ENCODE measurements at regions of chr3 and their contacts with region 1.

Region 1: GRCh38 chr3:63228087-63229023 is 49.8 kb upstream of the SYNPR start:
- DNase-seq: peak; percentile 60
- H3K4me3 Mint-ChIP-seq: no peak overlapping the region
- H3K27ac Mint-ChIP-seq: peak overlapping the region; percentile 59
- H3K4me1 Mint-ChIP-seq: peaks cover 12% of the 10 kb centered on the region
- H3K27me3 Mint-ChIP-seq: peaks cover 21% of the 10 kb centered on the region
- CTCF ChIP-seq: peak; percentile 57

Region 2: DNA sequence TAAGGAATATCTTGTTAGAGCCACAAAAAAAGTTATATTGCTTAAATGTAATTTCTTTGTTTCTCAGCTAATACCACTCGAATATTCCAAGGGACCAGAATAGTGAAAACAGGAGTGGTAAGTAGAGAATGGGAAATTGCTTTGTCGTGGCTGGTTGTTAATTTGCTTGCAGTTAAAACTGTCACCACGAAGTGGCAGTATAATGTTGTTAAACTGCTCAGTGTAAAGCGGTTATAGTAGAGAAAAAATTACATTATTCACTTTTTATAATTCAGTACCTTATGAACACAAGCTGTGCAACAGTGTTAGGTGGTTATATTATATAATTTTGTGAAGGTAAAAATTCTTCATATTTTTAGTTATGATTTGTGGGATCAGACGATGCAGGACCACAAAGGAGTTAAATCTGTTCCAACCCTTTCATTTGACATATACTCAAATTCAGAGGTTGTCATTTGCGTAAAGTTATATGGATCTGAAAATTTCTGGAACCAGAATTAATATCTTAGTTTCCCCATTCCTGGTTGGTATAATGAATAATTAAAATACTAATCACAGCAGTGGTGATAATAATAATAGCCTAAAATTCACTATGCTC is 1026.8 kb before region 1 on chr3:
- CTCF ChIA-PET with region 1: interaction called, 3 read pairs
- POLR2A ChIA-PET with region 1: no interaction called
- intact Hi-C with region 1: loop called (anchors 5 kb)
- DNase-seq: peak; percentile 41
- H3K4me3 Mint-ChIP-seq: no peak overlapping the region
- H3K27ac Mint-ChIP-seq: no peak overlapping the region
- H3K4me1 Mint-ChIP-seq: no peaks in the 10 kb centered on the region
- H3K27me3 Mint-ChIP-seq: no peaks in the 10 kb centered on the region
- CTCF ChIP-seq: peak; percentile 53

Region 3: DNA sequence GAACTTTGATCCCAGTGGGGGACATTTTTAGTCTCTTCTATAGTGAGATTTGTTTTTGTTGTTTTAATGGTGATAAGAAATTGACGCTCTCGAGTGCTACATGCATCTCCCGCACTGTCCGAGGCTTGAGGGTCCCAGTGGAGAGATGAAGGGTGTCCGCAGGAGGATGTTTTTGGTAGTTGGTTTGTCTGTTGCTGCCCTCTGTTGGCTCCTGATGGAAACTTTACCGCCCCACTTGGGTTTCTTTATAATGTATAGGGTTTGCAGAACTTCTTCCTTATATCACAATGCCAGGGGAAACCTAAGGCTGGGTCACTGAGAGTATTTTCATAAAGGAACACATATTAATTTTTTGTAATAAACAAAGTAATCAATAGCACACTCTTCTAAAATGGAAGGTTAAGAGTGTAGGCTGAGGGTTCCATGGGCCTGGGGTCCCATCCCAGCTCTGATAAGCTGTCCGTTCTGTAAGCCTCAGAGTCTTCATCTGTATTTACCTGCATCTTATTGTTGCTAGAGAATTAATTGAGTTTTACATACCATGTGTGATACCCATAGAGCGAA is 669.7 kb before region 1 on chr3:
- CTCF ChIA-PET with region 1: interaction called, 7 read pairs
- POLR2A ChIA-PET with region 1: interaction called, 3 read pairs
- intact Hi-C with region 1: loop called (anchors 5 kb)
- DNase-seq: peak; percentile 48
- H3K4me3 Mint-ChIP-seq: no peak overlapping the region
- H3K27ac Mint-ChIP-seq: no peak overlapping the region
- H3K4me1 Mint-ChIP-seq: peaks cover 13% of the 10 kb centered on the region
- H3K27me3 Mint-ChIP-seq: no peaks in the 10 kb centered on the region
- CTCF ChIP-seq: peak; percentile 45

Region 4: DNA sequence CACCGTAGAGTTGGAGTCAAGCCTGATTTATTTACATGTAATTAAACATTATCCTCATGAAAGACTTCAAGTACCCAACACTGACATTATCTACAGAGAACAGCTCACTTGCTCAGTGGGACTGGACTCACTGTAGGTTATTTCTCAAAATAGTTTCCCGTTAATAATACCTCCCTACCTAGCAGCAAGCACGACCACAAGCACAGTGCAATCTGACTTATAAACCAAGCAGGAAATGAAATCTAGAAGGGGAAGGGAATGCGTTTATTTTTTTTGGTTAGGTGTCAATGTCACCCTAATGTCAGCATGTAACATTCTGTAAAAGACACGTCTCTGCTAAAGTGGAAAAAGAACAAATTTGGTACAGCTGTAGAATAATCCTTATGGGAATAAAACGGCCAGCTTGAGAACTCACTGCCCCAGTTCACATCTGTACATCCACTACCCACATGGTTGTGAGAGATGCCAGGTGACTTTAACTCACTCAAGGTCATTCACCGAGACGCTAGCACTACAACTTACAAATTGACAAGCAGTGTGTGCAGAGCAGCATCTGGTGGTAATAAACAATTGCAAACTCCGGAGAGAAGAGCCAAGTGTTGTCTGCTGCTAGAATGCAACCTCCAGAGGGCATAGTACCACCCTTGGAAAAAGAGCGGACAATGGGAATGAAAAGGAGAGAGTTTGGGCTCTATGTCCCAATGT is 595.7 kb before region 1 on chr3:
- CTCF ChIA-PET with region 1: interaction called, 11 read pairs
- POLR2A ChIA-PET with region 1: no interaction called
- intact Hi-C with region 1: no loop called
- DNase-seq: no peak
- H3K4me3 Mint-ChIP-seq: no peak overlapping the region
- H3K27ac Mint-ChIP-seq: no peak overlapping the region
- H3K4me1 Mint-ChIP-seq: no peaks in the 10 kb centered on the region
- H3K27me3 Mint-ChIP-seq: no peaks in the 10 kb centered on the region
- CTCF ChIP-seq: no peak

Region 5: GRCh38 chr3:62678841-62679240 is 549.5 kb before region 1 on chr3:
- CTCF ChIA-PET with region 1: interaction called, 11 read pairs
- POLR2A ChIA-PET with region 1: no interaction called
- intact Hi-C with region 1: no loop called
- DNase-seq: no peak
- H3K4me3 Mint-ChIP-seq: no peak overlapping the region
- H3K27ac Mint-ChIP-seq: no peak overlapping the region
- H3K4me1 Mint-ChIP-seq: peaks cover 30% of the 10 kb centered on the region
- H3K27me3 Mint-ChIP-seq: no peaks in the 10 kb centered on the region
- CTCF ChIP-seq: no peak

Region 6: GRCh38 chr3:63193629-63194028 is 34.7 kb before region 1 on chr3:
- CTCF ChIA-PET with region 1: interaction called, 26 read pairs
- POLR2A ChIA-PET with region 1: interaction called, 3 read pairs
- intact Hi-C with region 1: no loop called
- DNase-seq: peak; percentile 26
- H3K4me3 Mint-ChIP-seq: no peak overlapping the region
- H3K27ac Mint-ChIP-seq: no peak overlapping the region
- H3K4me1 Mint-ChIP-seq: no peaks in the 10 kb centered on the region
- H3K27me3 Mint-ChIP-seq: peaks cover 64% of the 10 kb centered on the region
- CTCF ChIP-seq: peak; percentile 52

Region 7: GRCh38 chr3:63245548-63246241 is 17.3 kb after region 1 on chr3:
- CTCF ChIA-PET with region 1: interaction called, 26 read pairs
- POLR2A ChIA-PET with region 1: no interaction called
- intact Hi-C with region 1: no loop called
- DNase-seq: peak; percentile 5
- H3K4me3 Mint-ChIP-seq: no peak overlapping the region
- H3K27ac Mint-ChIP-seq: no peak overlapping the region
- H3K4me1 Mint-ChIP-seq: no peaks in the 10 kb centered on the region
- H3K27me3 Mint-ChIP-seq: peaks cover 99% of the 10 kb centered on the region
- CTCF ChIP-seq: no peak